ENCODE measurements at regions of chr2 and their contacts with region 1.

Region 1: DNA sequence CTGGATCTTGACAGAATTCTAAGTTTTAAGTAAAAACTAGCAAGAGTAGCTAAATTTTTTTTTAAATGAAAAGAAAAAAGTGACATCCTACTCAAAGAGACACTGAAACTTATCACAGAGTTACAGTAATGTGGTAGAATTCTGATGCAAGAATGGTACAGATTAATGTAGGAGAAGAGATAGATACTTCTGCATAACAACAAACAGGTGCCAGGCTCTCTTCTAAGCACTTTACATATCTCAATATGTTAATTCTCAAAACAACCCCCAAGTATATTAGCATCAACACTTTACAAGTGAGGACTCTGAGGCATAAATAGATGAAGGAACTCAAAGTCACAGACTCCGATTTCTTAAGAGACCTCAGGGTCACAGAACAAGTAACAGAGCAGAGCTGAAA is 28.1 kb downstream of the GCC2 start:
- DNase-seq: no peak
- ATAC-seq: no peak
- H3K4me3 ChIP-seq: no peak overlapping the region
- H3K27ac ChIP-seq: no peak overlapping the region
- H3K4me1 ChIP-seq: no peaks in the 10 kb centered on the region
- H3K27me3 ChIP-seq: no peaks in the 10 kb centered on the region
- CTCF ChIP-seq: no peak

Region 2: GRCh38 chr2:108403494-108403893 is 73.6 kb before region 1 on chr2:
- intact Hi-C with region 1: no loop called
- DNase-seq: no peak
- ATAC-seq: no peak
- H3K4me3 ChIP-seq: no peak overlapping the region
- H3K27ac ChIP-seq: no peak overlapping the region
- H3K4me1 ChIP-seq: no peaks in the 10 kb centered on the region
- H3K27me3 ChIP-seq: no peaks in the 10 kb centered on the region
- CTCF ChIP-seq: no peak

Region 3: DNA sequence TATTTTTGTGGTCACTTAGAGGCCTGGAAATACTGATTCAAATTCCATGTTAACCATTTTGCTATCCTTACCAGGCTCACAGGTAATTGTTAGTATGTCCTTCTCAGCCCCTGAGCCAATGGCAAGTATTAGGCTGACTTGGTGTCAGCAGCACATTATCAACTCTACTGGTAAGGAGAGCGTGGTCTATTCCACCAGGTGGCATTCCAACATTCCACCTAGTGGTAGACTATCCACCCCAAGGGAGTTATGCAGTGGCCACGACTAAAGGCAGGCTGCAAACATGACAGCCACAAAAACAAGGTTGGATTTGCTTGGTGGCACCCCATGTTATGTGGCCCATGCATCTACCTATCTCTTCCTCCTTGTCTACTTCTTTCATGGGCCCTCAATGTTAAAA is 59.8 kb before region 1 on chr2:
- intact Hi-C with region 1: no loop called
- DNase-seq: no peak
- ATAC-seq: no peak
- H3K4me3 ChIP-seq: no peak overlapping the region
- H3K27ac ChIP-seq: no peak overlapping the region
- H3K4me1 ChIP-seq: no peaks in the 10 kb centered on the region
- H3K27me3 ChIP-seq: no peaks in the 10 kb centered on the region
- CTCF ChIP-seq: no peak

Region 4: GRCh38 chr2:108444941-108445840 is 31.9 kb before region 1 on chr2:
- intact Hi-C with region 1: no loop called
- DNase-seq: no peak
- ATAC-seq: no peak
- H3K4me3 ChIP-seq: no peak overlapping the region
- H3K27ac ChIP-seq: no peak overlapping the region
- H3K4me1 ChIP-seq: peaks cover 4% of the 10 kb centered on the region
- H3K27me3 ChIP-seq: no peaks in the 10 kb centered on the region
- CTCF ChIP-seq: no peak

Region 5: GRCh38 chr2:108460345-108461037 is 16.6 kb before region 1 on chr2:
- intact Hi-C with region 1: loop called in 1 of 2 experiments (anchors 2 kb)
- DNase-seq: no peak
- ATAC-seq: no peak
- H3K4me3 ChIP-seq: no peak overlapping the region
- H3K27ac ChIP-seq: no peak overlapping the region
- H3K4me1 ChIP-seq: no peaks in the 10 kb centered on the region
- H3K27me3 ChIP-seq: no peaks in the 10 kb centered on the region
- CTCF ChIP-seq: no peak